Heart left ventricle (tissue), 16 donors: ENCODE measurements at regions of chr9 and their contacts with region 1.

Region 1: GRCh38 chr9:119221276-119221675 is 148.0 kb downstream of the BRINP1 start:
- DNase-seq: no peak
- ATAC-seq: no peak
- H3K4me3 ChIP-seq: no peak overlapping the region
- H3K27ac ChIP-seq: no peak overlapping the region
- H3K4me1 ChIP-seq: peaks cover 0 to 3% (median 0%) of the 10 kb centered on the region in 12 donors
- H3K27me3 ChIP-seq: no peaks in the 10 kb centered on the region
- CTCF ChIP-seq: no peak
- POLR2A ChIP-seq: no peak

Region 2: GRCh38 chr9:119179701-119180100 is 41.6 kb before region 1 on chr9:
- intact Hi-C with region 1: no loop called
- DNase-seq: no peak
- ATAC-seq: no peak
- H3K4me3 ChIP-seq: no peak overlapping the region
- H3K27ac ChIP-seq: no peak overlapping the region
- H3K4me1 ChIP-seq: peaks cover 0 to 9% (median 0%) of the 10 kb centered on the region in 12 donors
- H3K27me3 ChIP-seq: no peaks in the 10 kb centered on the region
- CTCF ChIP-seq: no peak
- POLR2A ChIP-seq: no peak

Region 3: DNA sequence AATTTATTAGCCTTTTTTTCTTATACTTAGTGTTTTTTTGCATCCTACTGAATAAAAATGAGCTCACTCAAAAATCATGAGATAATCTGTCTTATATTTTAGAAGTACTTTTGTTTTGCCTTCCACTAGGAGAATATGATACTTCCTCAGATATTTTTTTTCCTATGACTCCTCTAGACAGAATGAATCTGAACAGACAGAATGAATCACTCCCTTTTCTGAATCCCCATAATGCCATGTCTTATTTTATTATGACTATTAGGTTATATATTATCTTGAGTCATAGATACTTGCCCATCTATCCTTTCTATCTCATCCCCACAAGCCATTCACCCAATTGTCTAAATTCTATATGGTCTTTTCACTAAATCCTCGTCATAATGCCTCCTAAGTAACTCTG is 13.4 kb after region 1 on chr9:
- intact Hi-C with region 1: loop called in 1 of 10 experiments (anchors 1 kb)
- DNase-seq: no peak
- ATAC-seq: no peak
- H3K4me3 ChIP-seq: no peak overlapping the region
- H3K27ac ChIP-seq: no peak overlapping the region
- H3K4me1 ChIP-seq: no peaks in the 10 kb centered on the region
- H3K27me3 ChIP-seq: no peaks in the 10 kb centered on the region
- CTCF ChIP-seq: no peak
- POLR2A ChIP-seq: no peak